Activated T-helper 1 cell treated with anti-CD3 and anti-CD28 coated beads, Interleukin-12 subunit alpha, Interleukin-12 subunit beta, Interleukin-2, Interleukin-4 antibody, amounts not matched to agents 30 ng/mL and 10 ng/mL and 1 ng/mL, durations not matched to agents 14 hours and 24 hours and 36 hours (primary cell): ENCODE measurements at regions of chr1 and their contacts with region 1.

Region 1: DNA sequence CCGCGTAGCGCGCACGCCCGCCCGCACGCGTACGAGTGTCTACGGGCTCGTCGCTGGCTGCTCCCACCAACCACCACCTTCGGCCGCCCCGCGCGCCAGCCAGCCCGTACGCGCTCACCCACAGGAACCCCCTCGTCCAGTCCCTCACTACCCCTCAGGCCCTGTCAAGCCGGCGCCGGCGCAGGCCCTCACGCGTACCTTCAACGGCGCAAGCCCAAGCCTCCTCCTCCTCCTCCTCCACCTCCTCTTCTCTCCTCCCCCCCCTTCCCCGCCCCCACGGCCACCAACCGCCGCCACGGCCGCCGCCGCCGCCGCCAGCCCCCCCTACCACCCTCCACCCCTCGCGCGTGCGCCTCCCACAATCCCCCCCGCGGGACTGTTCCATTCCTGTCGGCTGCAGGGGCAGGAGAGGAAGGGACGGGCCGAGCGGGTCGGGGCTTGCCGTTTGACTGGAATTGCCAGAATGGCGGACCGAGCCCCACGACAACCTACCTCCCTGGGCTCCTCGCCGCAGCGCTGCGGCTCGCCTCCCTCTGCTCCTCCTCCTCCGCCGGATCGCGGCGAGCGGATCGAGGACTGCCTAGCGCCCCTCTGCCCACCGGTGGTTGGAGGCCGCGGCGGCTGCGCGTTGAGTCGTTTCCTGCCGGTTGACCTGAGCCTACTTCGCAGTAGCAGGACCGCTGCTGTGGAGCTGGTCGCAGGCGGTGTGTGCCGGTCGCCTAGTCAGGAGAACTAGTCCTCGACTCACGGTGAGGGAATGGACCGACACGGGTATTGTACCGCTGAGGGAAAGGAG is at the start of gene ASH1L:
- DNase-seq: peak; percentile 85
- H3K4me3 Mint-ChIP-seq: peak within 1 kb of the TSS; percentile 96
- H3K27ac Mint-ChIP-seq: peak within 1 kb of the TSS; percentile 99
- H3K4me1 Mint-ChIP-seq: peaks cover 24% of the 10 kb centered on the region
- H3K27me3 Mint-ChIP-seq: no peaks in the 10 kb centered on the region
- total RNA-seq, gene ASH1L: 44.0 and 45.4 TPM in 2 replicates

Region 2: DNA sequence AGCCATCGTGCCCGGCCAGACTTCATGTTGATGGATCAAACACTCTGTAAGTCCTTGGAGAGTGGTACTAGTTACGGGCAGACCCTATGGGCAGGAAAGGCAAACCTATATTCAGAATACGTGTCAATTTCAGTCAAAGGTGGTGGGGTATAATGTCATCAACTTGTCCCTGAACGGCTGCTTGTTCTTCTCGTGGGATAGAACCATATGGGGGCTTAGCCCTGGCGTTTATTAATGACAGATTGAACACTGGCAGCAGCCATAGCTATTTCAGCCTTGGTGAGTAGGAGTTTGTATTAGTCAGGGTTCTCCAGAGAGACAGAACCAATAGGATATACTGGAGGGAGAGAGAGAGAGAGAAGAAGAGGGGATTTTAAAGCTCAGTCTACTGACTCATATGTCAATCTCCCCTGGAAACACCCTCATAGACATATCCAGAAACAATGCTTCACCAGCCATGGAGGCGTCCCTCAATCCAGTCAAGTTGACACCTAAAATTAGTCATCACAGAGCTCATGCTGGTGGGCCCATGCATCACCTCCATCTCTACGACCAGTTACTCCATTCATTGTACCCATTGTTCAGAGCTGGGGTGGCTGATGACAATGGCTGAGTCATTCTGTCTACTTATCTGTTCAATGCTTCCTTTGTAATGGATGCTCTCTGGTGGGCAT is 1258.0 kb before region 1 on chr1:
- intact Hi-C with region 1: no loop called
- DNase-seq: no peak
- H3K4me3 Mint-ChIP-seq: no peak overlapping the region
- H3K27ac Mint-ChIP-seq: no peak overlapping the region
- H3K4me1 Mint-ChIP-seq: peaks cover 19% of the 10 kb centered on the region
- H3K27me3 Mint-ChIP-seq: no peaks in the 10 kb centered on the region

Region 3: GRCh38 chr1:155193275-155193990 is 369.3 kb before region 1 on chr1:
- intact Hi-C with region 1: loop called (anchors 5 kb)
- DNase-seq: peak; percentile 72
- H3K4me3 Mint-ChIP-seq: peak overlapping the region; percentile 88
- H3K27ac Mint-ChIP-seq: peak overlapping the region; percentile 97
- H3K4me1 Mint-ChIP-seq: peaks cover 39% of the 10 kb centered on the region
- H3K27me3 Mint-ChIP-seq: no peaks in the 10 kb centered on the region

Region 4: DNA sequence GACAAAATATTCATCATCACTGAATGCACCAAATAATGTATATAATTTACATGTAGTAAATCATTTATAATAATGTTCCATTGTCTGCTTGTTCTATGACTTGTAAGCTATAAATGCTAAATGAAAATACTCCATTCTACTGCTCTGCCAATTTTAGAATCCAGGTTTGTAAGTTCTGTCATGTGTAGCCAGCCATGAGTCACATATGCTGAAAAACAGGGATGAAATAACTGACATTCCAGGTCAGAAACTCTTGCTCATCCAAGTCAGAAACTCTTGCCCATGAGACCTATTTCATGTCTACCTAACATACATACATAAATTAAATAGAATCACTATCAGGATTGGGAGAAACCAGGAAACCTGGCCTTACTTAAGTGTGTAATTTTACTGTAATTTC is 95.8 kb before region 1 on chr1:
- intact Hi-C with region 1: loop called (anchors 1 kb)
- DNase-seq: no peak
- H3K4me3 Mint-ChIP-seq: peak overlapping the region; percentile 15
- H3K27ac Mint-ChIP-seq: peak overlapping the region; percentile 76
- H3K4me1 Mint-ChIP-seq: peaks cover 57% of the 10 kb centered on the region
- H3K27me3 Mint-ChIP-seq: no peaks in the 10 kb centered on the region

Region 5: DNA sequence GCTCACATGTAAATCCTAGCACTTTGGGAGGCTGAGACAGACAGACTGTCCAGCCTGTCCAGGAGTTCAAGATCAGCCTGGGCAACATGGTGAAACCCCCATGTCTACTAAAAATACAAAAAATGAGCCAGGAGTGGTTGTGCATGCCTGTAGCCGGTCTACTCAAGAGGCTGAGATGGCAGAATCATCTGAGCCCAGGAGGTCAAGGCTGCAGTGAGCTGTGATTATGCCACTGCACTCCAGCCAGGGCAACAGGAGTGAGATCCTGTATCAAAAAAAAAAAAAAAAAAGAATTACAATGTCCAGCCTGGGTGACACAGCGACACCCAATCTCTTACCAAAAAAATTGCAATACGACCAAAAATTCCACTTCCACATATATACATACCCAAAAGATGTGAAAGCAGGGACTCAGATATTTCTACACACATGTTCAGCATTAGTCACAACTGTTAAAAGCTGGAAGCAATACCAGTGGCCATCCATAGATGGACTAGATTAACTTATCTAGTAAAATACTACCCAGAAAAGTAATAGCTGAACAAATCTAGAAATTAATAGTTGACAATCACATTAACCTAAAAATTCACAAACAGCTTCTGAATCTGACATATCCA is 49.4 kb before region 1 on chr1:
- intact Hi-C with region 1: loop called (anchors 10 kb)
- DNase-seq: no peak
- H3K4me3 Mint-ChIP-seq: no peak overlapping the region
- H3K27ac Mint-ChIP-seq: no peak overlapping the region
- H3K4me1 Mint-ChIP-seq: peaks cover 32% of the 10 kb centered on the region
- H3K27me3 Mint-ChIP-seq: no peaks in the 10 kb centered on the region

Region 6: DNA sequence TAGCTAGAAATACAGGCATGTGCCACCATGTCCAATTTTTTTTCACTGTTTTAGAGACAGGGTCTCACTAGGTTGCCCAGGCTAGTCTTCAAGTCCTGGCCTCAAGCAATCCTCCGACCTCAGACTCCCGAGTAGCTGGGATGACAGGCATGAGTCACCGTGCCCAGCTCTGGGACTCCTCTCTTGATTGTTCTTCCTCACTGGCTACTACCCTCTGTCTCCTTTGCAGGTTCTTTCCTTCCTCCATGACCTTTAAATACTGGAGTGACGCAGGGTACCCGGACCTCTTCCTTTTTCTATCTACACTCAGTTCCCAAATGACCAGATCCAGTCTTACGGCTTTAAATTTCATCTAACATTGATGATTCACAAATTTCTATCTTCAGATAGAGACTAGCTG is 35.1 kb before region 1 on chr1:
- intact Hi-C with region 1: no loop called
- DNase-seq: no peak
- H3K4me3 Mint-ChIP-seq: no peak overlapping the region
- H3K27ac Mint-ChIP-seq: no peak overlapping the region
- H3K4me1 Mint-ChIP-seq: peaks cover 30% of the 10 kb centered on the region
- H3K27me3 Mint-ChIP-seq: no peaks in the 10 kb centered on the region

Region 7: GRCh38 chr1:155540000-155540874 is 22.5 kb before region 1 on chr1:
- intact Hi-C with region 1: loop called (anchors 1 kb)
- DNase-seq: no peak
- H3K4me3 Mint-ChIP-seq: peak overlapping the region; percentile 49
- H3K27ac Mint-ChIP-seq: peak overlapping the region; percentile 93
- H3K4me1 Mint-ChIP-seq: peaks cover 54% of the 10 kb centered on the region
- H3K27me3 Mint-ChIP-seq: no peaks in the 10 kb centered on the region

Region 8: DNA sequence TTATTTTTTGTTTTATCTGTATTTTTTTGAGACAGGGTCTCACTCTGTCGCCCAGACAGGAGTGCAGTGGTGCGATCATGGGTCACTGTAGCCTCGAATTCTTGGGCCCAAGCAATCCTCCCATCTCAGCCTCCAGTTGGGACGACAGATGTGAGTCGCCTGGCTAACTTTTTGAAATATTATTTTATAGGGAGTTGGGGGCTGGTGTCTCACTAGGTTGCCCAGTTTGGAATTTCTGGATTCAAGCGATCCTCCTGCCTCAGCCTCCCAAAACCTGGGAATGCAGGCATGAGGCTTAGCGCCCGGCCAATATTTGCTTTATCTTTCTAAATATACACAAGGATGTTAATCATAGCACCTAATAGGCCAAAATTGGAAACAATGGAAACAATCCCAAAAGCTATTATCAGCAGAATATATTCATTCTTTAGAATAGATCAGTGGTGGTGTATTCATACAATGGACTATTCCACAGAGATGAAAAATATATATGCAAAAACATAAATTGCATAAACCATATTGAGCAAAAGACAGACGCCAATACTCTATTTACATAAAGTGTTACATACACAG is 182.0 kb after region 1 on chr1:
- intact Hi-C with region 1: loop called (anchors 5 kb)
- DNase-seq: no peak
- H3K4me3 Mint-ChIP-seq: peak overlapping the region; percentile 99
- H3K27ac Mint-ChIP-seq: peak overlapping the region; percentile 95
- H3K4me1 Mint-ChIP-seq: peaks cover 12% of the 10 kb centered on the region
- H3K27me3 Mint-ChIP-seq: no peaks in the 10 kb centered on the region